Psoas muscle (tissue), 8 donors: ENCODE measurements at regions of chr16 and their contacts with region 1.

Region 1: GRCh38 chr16:75789237-75789636 is 62.9 kb upstream of the CPHXL start:
- DNase-seq: no peak
- ATAC-seq: peak in 1 of 4 donors; percentile 35
- H3K4me3 ChIP-seq: no peak overlapping the region
- H3K27ac ChIP-seq: no peak overlapping the region
- H3K4me1 ChIP-seq: no peaks in the 10 kb centered on the region
- H3K27me3 ChIP-seq: peaks cover 0 to 11% (median 0%) of the 10 kb centered on the region in 3 donors
- CTCF ChIP-seq: peak; percentile 77

Region 2: DNA sequence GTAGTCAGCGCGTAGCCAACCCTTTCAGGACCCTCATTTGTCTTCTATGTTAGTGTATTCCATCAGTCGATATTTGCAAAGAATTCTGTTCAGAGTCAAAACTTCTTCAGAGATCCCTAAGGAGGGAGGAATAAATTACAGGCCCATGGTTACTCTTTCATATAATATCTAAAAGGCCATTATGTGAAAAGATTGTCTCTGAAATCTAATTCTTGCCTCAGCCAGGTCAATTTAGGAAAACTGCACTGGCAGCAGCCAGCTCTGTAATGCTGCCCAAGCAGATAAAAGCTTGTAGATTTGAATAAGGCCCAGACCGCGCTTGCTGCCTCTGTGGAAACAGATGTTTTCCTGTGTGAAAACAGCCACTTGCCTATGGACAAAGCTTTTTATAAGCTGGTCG is 867.8 kb after region 1 on chr16:
- intact Hi-C with region 1: loop called in 1 of 2 experiments (anchors 5 kb)
- DNase-seq: no peak
- ATAC-seq: no peak
- H3K4me3 ChIP-seq: no peak overlapping the region
- H3K27ac ChIP-seq: no peak overlapping the region
- H3K4me1 ChIP-seq: no peaks in the 10 kb centered on the region
- H3K27me3 ChIP-seq: no peaks in the 10 kb centered on the region
- CTCF ChIP-seq: no peak

Region 3: GRCh38 chr16:77171745-77172635 is 1382.8 kb after region 1 on chr16:
- intact Hi-C with region 1: loop called (anchors 2 kb)
- DNase-seq: no peak
- ATAC-seq: peak; percentile 44 to 74 (median 66)
- H3K4me3 ChIP-seq: no peak overlapping the region
- H3K27ac ChIP-seq: no peak overlapping the region
- H3K4me1 ChIP-seq: no peaks in the 10 kb centered on the region
- H3K27me3 ChIP-seq: peaks cover 0 to 5% (median 3%) of the 10 kb centered on the region in 3 donors
- CTCF ChIP-seq: peak; percentile 74